MCF 10A (cell line): ENCODE measurements at regions of chr3 and their contacts with region 1.

Region 1: DNA sequence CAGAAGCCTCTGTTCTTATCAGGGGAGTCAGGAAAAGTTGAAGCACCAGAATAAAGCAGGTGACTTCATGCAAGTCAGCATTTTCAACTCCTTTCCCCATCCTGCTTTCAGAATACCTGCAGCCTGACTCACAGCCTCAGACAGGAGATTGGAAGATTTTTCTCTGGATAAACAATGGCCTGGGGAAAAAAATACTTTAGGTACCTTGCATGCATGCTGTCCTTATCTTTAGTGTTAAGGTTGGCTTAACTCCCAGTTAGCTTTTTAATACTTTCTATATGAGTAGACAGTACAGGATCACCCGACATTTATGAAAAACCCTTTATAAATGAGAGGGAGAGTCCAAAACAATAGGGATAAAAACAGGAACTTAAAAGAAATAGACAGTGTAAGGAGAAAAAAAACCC is 53.6 kb downstream of the PAK2 start:
- DNase-seq: peak; percentile 91
- H3K4me3 Mint-ChIP-seq: peak overlapping the region; percentile 45
- H3K27ac Mint-ChIP-seq: peak overlapping the region; percentile 71
- H3K4me1 Mint-ChIP-seq: peaks cover 24% of the 10 kb centered on the region
- H3K27me3 Mint-ChIP-seq: no peaks in the 10 kb centered on the region
- CTCF ChIP-seq: no peak

Region 2: DNA sequence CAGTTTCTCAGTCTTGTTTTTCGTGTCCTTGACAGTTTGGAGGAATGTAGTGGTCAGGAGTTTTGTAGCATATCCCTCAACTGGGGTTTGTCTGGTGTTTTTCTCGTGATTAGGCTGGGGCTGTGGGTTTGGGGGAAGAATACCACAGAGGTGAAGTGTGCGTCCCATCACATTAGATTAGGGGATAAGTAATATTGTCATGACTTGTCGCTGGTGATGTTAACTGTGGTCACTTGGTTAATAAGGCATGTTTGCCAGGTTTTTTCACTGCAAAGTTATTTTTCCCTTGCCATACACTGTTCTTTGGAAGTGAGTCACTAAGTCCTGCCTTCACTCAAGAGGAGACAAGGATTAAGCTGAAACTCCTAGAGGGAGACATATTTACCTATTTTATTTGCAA is 14.5 kb before region 1 on chr3:
- CTCF ChIA-PET with region 1: interaction called, 6 read pairs
- POLR2A ChIA-PET with region 1: interaction called, 14 read pairs
- intact Hi-C with region 1: no loop called
- DNase-seq: peak; percentile 20
- H3K4me3 Mint-ChIP-seq: no peak overlapping the region
- H3K27ac Mint-ChIP-seq: peak overlapping the region; percentile 95
- H3K4me1 Mint-ChIP-seq: peaks cover 32% of the 10 kb centered on the region
- H3K27me3 Mint-ChIP-seq: no peaks in the 10 kb centered on the region
- CTCF ChIP-seq: no peak